ENCODE measurements at regions of chr9 and their contacts with region 1.

Region 1: DNA sequence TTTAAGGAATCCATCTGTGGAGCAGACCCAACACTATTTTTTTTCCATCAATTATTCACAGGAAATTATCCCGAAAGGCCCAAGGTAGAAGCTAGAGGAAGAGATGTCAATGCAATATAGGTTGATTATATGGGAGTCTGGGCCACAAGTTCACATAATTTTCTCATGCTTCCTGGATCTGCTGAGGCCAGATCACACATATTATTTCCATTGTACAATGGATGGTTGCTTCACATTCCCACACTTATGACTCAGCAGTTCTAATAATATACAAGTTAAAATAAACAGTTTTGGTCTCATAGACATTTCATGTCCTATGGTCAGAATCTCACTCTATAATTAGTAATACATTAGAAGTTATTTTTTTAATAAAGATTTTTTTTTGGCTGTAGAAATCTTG is 66.0 kb upstream of the PTPRD start:
- DNase-seq: no peak
- ATAC-seq: no peak
- H3K4me3 ChIP-seq: no peak overlapping the region
- H3K27ac ChIP-seq: no peak overlapping the region
- H3K4me1 ChIP-seq: no peaks in the 10 kb centered on the region
- H3K27me3 ChIP-seq: no peaks in the 10 kb centered on the region
- CTCF ChIP-seq: no peak

Region 2: DNA sequence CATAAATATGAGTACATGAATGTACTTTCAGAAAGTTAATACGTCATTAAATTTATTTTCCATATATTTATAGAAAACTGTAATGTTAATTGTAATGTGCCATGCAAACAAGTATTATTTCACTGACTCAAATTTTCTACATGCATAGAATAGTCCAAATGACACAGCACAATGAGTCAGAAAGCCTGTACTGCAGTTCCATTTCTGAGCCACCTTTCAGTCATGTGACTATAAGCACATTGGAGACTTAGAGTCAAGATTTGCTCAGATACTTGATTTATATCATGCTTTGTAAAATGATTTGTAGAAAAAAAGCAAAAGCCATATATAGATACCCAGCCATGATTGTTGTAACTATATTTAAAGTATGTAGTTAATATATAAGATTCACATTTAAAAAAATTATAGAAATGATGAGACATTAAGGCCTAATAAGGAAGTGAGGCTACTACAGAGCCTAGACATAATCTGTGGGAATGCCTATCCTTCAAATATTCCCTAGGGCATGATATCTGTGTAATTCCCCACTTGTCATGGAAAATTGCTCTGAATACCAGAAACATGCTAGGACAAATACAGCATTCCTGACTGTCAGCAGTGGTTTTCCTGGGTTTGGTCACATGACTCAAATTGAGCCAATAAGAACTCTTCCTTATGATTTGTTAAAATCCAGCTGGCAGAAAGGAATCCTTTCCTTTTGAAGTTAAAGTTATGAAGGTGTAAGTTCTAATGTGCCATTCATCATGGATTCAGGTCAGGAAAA is 116.0 kb before region 1 on chr9:
- CTCF ChIA-PET with region 1: no interaction called
- POLR2A ChIA-PET with region 1: no interaction called
- in situ Hi-C with region 1: no loop called
- intact Hi-C with region 1: no loop called
- DNase-seq: no peak
- ATAC-seq: no peak
- H3K4me3 ChIP-seq: no peak overlapping the region
- H3K27ac ChIP-seq: no peak overlapping the region
- H3K4me1 ChIP-seq: no peaks in the 10 kb centered on the region
- H3K27me3 ChIP-seq: no peaks in the 10 kb centered on the region
- CTCF ChIP-seq: no peak

Region 3: GRCh38 chr9:10704720-10705119 is 25.9 kb after region 1 on chr9:
- CTCF ChIA-PET with region 1: no interaction called
- POLR2A ChIA-PET with region 1: no interaction called
- in situ Hi-C with region 1: no loop called
- intact Hi-C with region 1: loop called (anchors 2 kb)
- DNase-seq: no peak
- ATAC-seq: no peak
- H3K4me3 ChIP-seq: no peak overlapping the region
- H3K27ac ChIP-seq: no peak overlapping the region
- H3K4me1 ChIP-seq: no peaks in the 10 kb centered on the region
- H3K27me3 ChIP-seq: no peaks in the 10 kb centered on the region
- CTCF ChIP-seq: no peak

Region 4: DNA sequence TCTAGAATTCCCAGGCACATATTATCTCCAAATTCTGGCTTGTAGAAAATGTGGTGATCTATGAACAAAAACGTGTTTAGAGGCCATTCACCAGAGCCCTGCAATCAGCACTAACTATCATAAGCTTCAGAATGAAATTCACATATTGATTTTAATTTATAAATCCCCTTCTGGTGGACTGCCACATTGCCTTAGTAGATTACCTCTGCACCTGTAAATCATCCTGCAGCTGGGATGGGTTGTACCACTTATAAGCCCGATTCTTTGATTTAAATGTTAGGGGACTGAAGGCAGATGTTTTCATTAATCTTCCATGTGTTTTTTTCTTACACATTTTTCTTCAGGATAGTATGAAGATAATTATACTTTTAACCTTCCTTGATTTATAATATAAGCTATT is 74.7 kb after region 1 on chr9:
- CTCF ChIA-PET with region 1: no interaction called
- POLR2A ChIA-PET with region 1: no interaction called
- in situ Hi-C with region 1: no loop called
- intact Hi-C with region 1: no loop called
- DNase-seq: no peak
- ATAC-seq: no peak
- H3K4me3 ChIP-seq: no peak overlapping the region
- H3K27ac ChIP-seq: no peak overlapping the region
- H3K4me1 ChIP-seq: no peaks in the 10 kb centered on the region
- H3K27me3 ChIP-seq: no peaks in the 10 kb centered on the region
- CTCF ChIP-seq: no peak